Left lung (tissue), 14 donors: ENCODE measurements at regions of chr5 and their contacts with region 1.

Region 1: DNA sequence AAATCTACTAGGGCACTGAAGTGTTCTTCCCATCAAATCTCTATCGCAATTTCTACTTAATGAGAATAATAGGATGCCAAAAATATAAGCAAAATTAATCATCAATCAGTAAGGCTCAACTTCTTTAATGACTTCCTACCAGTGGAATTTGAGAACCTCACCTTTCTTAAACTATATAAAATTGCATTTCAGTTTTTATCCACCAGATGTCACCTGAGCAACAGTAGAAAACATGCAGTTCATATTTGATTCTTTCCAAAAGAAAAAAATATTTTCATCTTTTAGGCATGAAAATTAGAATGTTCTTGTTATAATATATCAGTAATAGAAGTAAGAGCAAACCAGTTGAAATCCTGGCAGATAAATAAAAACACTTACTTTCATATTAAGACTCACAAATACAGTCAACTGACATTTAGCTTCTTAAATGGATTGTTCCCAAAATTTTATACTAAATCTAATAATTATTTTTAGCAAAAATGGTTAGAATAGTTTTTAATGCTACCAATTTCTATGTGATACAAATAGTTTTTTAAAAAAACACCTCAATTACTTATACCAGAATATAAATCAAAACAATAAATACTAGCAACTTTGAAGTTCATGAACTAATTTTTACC is 13.4 kb upstream of the CCDC112 start:
- DNase-seq: peak in 1 of 4 donors; percentile 36
- ATAC-seq: peak; percentile 68
- H3K4me3 ChIP-seq: no peak overlapping the region
- H3K27ac ChIP-seq: no peak overlapping the region
- H3K4me1 ChIP-seq: no peaks in the 10 kb centered on the region
- H3K27me3 ChIP-seq: peaks cover 0 to 8% of the 10 kb centered on the region in 2 donors
- CTCF ChIP-seq: peak; percentile 51 to 67

Region 2: DNA sequence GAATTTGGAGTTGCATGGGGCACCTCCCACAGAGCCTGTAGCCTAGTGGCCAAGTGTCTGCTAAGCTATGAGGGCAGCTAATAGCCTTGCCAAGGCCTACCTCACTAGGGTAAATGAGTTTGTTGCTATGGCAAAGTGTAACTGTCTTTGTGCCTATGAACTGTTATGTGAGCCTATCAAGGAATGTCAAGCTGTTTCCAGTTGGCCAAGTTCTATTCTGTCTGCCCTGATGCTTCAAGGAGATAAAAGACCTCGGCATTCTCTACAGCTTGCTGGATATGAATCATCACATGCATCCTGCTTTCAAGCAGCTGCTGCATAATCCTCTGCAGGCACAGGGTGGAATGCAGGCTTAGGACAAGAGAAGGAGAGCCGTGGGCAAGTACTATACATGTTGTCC is 56.4 kb after region 1 on chr5:
- intact Hi-C with region 1: no loop called
- DNase-seq: no peak
- ATAC-seq: peak; percentile 39
- H3K4me3 ChIP-seq: no peak overlapping the region
- H3K27ac ChIP-seq: no peak overlapping the region
- H3K4me1 ChIP-seq: no peaks in the 10 kb centered on the region
- H3K27me3 ChIP-seq: no peaks in the 10 kb centered on the region
- CTCF ChIP-seq: no peak

Region 3: DNA sequence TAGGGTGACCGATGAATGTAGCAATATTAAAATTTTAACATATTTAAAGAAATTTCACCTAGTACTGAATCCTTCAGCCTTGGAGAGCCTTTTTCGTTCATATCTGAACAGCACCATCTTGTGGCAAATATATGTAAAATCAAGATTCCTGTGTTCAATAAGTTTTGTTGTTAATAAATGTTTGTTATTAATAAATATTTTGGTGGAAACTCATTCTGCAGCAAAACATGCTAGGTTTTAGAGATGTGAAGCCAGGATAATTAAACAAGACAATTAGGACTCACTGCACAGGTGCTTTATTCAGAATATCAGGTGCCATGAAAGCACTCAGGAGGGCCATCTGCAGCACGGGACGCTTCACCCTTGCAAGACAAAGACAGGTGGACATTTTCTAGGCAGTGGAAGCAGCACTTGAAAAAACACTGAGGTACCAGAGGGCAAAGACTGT is 276.8 kb after region 1 on chr5:
- intact Hi-C with region 1: loop called in 1 of 2 experiments (anchors 5 kb)
- DNase-seq: peak in 1 of 4 donors; percentile 13
- ATAC-seq: peak; percentile 65
- H3K4me3 ChIP-seq: no peak overlapping the region
- H3K27ac ChIP-seq: no peak overlapping the region
- H3K4me1 ChIP-seq: no peaks in the 10 kb centered on the region
- H3K27me3 ChIP-seq: no peaks in the 10 kb centered on the region
- CTCF ChIP-seq: peak; percentile 39 to 41